Natural killer cell (primary cell): ENCODE measurements at regions of chr16 and their contacts with region 1.

Region 1: GRCh38 chr16:30122604-30123160 is 338 bp downstream of the MAPK3 start:
- DNase-seq: peak in 1 of 2 donors; percentile 45
- ATAC-seq: peak; percentile 7 to 9 (median 8)
- H3K4me3 ChIP-seq: peak overlapping the region; percentile 83
- H3K4me3 Mint-ChIP-seq: peak overlapping the region; percentile 90
- H3K27ac ChIP-seq: peak overlapping the region; percentile 61
- H3K27ac Mint-ChIP-seq: peak overlapping the region; percentile 72 to 87
- H3K4me1 ChIP-seq: peaks cover 32% of the 10 kb centered on the region
- H3K4me1 Mint-ChIP-seq: peaks cover 23 to 32% of the 10 kb centered on the region in 2 donors
- H3K27me3 ChIP-seq: no peaks in the 10 kb centered on the region
- H3K27me3 Mint-ChIP-seq: no peaks in the 10 kb centered on the region
- CTCF ChIP-seq: no peak

Region 2: DNA sequence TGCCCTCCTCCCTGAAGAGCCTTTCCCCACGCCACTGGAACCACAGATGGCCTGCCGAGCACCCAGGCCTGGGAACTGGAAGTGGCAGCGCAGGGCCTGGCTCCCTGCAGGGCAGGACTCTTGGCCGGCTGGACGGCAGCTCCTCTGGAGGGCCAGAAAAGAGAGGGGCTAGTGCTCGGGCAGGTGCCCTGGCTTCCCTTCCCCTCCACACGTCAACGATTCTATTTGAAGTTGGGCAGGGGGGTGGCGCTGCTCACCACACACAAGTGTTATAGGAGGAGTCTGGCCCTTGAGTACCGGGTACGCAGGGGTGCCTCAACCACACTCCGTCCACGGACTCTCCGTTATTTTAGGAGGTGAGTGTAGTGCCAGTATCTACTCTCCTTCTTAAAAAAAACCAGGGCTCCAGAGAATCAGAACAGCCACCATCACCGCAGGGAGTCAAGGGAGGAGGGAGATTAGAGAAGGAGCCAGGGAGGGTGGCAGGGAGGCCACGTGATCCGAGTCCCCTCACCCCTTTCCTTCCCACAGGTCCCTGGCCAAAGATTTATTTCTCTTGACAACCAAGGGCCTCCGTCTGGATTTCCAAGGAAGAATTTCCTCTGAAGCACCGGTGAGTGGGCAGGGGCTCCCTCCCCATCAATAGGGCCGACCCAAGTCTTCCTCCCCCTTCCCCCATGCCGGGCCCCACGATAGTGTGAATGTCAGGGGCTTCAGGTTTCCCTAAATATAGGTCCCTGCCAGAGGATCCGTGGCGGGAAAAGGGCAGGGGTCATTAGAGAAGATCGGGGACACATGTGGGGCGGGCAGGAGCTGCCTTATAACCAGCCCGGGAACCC is 58.6 kb before region 1 on chr16:
- intact Hi-C with region 1: no loop called
- DNase-seq: peak; percentile 65 to 81
- ATAC-seq: peak in 2 of 3 donors; percentile 19 to 20
- H3K4me3 ChIP-seq: peak overlapping the region; percentile 96
- H3K4me3 Mint-ChIP-seq: peak overlapping the region; percentile 98
- H3K27ac ChIP-seq: peak overlapping the region; percentile 79
- H3K27ac Mint-ChIP-seq: peak overlapping the region; percentile 94 to 98
- H3K4me1 ChIP-seq: peaks cover 42% of the 10 kb centered on the region
- H3K4me1 Mint-ChIP-seq: peaks cover 31 to 47% of the 10 kb centered on the region in 2 donors
- H3K27me3 ChIP-seq: no peaks in the 10 kb centered on the region
- H3K27me3 Mint-ChIP-seq: no peaks in the 10 kb centered on the region
- CTCF ChIP-seq: no peak

Region 3: GRCh38 chr16:30091474-30092372 is 31.0 kb before region 1 on chr16 and contains the start of gene TBX6:
- intact Hi-C with region 1: loop called (anchors 2 kb)
- DNase-seq: peak; percentile 93 to 96
- ATAC-seq: peak; percentile 85 to 93 (median 86)
- H3K4me3 ChIP-seq: peak within 1 kb of the TSS; percentile 65
- H3K4me3 Mint-ChIP-seq: peak within 1 kb of the TSS; percentile 88
- H3K27ac ChIP-seq: peak within 1 kb of the TSS; percentile 69
- H3K27ac Mint-ChIP-seq: peak within 1 kb of the TSS; percentile 91 to 93
- H3K4me1 ChIP-seq: peaks cover 53% of the 10 kb centered on the region
- H3K4me1 Mint-ChIP-seq: peaks cover 28 to 44% of the 10 kb centered on the region in 2 donors
- H3K27me3 ChIP-seq: no peaks in the 10 kb centered on the region
- H3K27me3 Mint-ChIP-seq: no peaks in the 10 kb centered on the region
- CTCF ChIP-seq: peak; percentile 78
- total RNA-seq, gene TBX6: 0.91 to 1.1 (median 0.98) TPM

Region 4: GRCh38 chr16:30104494-30104968 is 18.2 kb before region 1 on chr16:
- intact Hi-C with region 1: no loop called
- DNase-seq: no peak
- ATAC-seq: no peak
- H3K4me3 ChIP-seq: no peak overlapping the region
- H3K4me3 Mint-ChIP-seq: no peak overlapping the region
- H3K27ac ChIP-seq: no peak overlapping the region
- H3K27ac Mint-ChIP-seq: no peak overlapping the region
- H3K4me1 ChIP-seq: no peaks in the 10 kb centered on the region
- H3K4me1 Mint-ChIP-seq: no peaks in the 10 kb centered on the region
- H3K27me3 ChIP-seq: no peaks in the 10 kb centered on the region
- H3K27me3 Mint-ChIP-seq: no peaks in the 10 kb centered on the region
- CTCF ChIP-seq: no peak

Region 5: GRCh38 chr16:30142672-30143346 is 20.1 kb after region 1 on chr16:
- intact Hi-C with region 1: no loop called
- DNase-seq: peak in 1 of 2 donors; percentile 69
- ATAC-seq: peak; percentile 70 to 88 (median 87)
- H3K4me3 ChIP-seq: no peak overlapping the region
- H3K4me3 Mint-ChIP-seq: no peak overlapping the region
- H3K27ac ChIP-seq: no peak overlapping the region
- H3K27ac Mint-ChIP-seq: peak overlapping the region; percentile 19 to 64
- H3K4me1 ChIP-seq: peaks cover 8% of the 10 kb centered on the region
- H3K4me1 Mint-ChIP-seq: peaks cover 13 to 14% of the 10 kb centered on the region in 2 donors
- H3K27me3 ChIP-seq: no peaks in the 10 kb centered on the region
- H3K27me3 Mint-ChIP-seq: peaks cover 0 to 3% of the 10 kb centered on the region in 2 donors
- CTCF ChIP-seq: peak; percentile 42